ENCODE measurements at regions of chr7 and their contacts with region 1.

Region 1: DNA sequence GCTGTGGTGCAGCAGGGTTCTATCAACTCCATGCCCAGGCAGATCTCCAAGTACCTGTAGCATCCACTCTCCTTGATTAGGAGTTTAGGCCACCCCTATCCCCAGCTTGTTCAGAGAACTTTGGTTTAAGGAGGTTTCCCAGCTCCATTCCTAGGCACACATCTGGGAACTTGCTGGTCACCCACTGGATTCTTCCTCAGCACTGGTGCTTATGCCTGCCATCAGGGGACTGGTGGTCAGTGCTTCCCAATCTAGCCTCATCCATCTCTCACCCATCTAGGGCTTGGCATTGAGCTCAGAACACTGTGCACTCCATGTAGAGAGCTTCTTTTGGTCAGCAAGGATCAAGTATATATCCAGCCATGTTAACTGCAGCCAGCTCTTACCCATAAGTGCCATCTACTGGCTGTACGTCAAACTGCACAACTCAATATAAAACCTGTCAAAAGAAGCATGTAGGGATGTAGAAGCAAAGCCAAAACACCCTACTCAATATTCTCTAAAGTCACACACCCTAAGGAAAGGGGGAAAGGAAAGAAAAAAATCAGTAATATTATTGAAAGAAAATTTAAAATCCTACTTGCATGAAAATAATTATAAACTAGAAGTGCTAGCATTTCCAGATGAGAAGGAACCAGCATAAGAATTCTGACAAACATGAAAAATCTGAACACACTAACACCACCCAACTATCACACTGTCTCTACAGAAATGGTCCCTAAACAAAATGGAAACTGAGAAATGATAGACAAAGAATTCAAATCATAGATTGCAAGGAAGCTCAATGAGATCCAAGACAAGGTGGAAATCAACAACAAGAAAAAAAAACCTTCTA is 531.2 kb upstream of the STEAP1 start:
- DNase-seq: no peak
- H3K4me3 Mint-ChIP-seq: no peak overlapping the region
- H3K27ac Mint-ChIP-seq: no peak overlapping the region
- H3K4me1 Mint-ChIP-seq: peaks cover 22% of the 10 kb centered on the region
- H3K27me3 Mint-ChIP-seq: no peaks in the 10 kb centered on the region

Region 2: DNA sequence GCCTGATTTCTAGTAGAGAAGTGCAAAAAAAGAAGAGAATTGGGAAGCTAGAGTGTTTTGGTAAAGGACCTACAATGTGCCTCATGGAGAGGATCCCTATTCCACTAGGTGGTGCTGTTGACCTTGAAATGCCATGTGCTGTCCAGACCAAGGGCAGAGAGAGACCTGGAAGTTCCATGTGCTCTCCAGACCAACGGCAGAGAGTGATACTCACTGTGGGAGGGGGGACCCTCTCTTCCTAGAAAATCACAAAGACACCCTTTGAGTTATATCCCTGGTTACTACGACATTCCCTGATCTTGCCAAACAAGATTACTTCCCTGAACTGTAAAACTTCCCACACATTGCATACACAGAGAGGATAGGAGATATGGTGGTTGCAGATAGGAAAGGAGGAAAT is 1076.2 kb before region 1 on chr7:
- intact Hi-C with region 1: loop called (anchors 5 kb)
- DNase-seq: no peak
- H3K4me3 Mint-ChIP-seq: no peak overlapping the region
- H3K27ac Mint-ChIP-seq: no peak overlapping the region
- H3K4me1 Mint-ChIP-seq: no peaks in the 10 kb centered on the region
- H3K27me3 Mint-ChIP-seq: no peaks in the 10 kb centered on the region

Region 3: GRCh38 chr7:88789480-88790064 is 833.5 kb before region 1 on chr7:
- intact Hi-C with region 1: loop called (anchors 5 kb)
- DNase-seq: no peak
- H3K4me3 Mint-ChIP-seq: no peak overlapping the region
- H3K27ac Mint-ChIP-seq: no peak overlapping the region
- H3K4me1 Mint-ChIP-seq: no peaks in the 10 kb centered on the region
- H3K27me3 Mint-ChIP-seq: no peaks in the 10 kb centered on the region

Measured in activated T-helper 2 cell treated with anti-CD3 and anti-CD28 coated beads, Interferon-gamma antibody, Interleukin-2, Interleukin-4, amounts not matched to agents 10 μg/mL and 5 μg/mL and 100 μg/mL, durations not matched to agents 14 hours and 24 hours and 36 hours (primary cell).